WTC11 (cell line): ENCODE measurements at regions of chr1 and their contacts with region 1.

Region 1: DNA sequence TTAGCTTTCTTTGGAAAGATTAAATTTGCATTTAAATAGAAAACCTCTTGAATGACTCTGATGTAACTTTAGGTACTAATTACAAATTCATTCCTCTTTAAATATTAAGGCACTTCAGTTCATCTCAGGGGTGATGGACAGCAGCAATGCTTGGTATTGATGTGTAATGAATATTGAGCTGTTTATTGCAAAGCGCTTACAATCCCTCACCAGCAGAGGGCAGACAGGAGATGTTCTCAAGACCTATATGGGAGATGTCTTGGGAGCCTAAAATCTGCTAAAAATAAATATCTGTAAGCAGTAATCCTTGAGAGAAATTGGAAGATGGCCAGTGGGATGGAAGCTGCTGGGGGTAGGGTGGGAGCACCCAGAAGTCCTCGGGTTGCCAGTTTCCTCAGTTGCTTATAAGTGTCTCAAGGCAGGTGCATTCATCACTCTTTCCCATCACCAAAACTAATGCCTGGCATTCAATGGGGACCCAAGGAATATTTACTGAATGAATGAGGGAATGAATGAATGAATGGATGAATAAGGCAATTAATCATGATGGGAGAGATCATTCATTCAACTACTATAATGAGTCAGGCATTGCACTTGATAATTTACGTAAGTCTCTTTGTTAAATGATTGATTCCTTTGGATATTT is 2.3 kb downstream of the KLHDC8A start:
- DNase-seq: peak; percentile 68
- ATAC-seq: no peak
- H3K4me3 Mint-ChIP-seq: no peak overlapping the region
- H3K27ac Mint-ChIP-seq: no peak overlapping the region
- H3K4me1 Mint-ChIP-seq: peaks cover 79% of the 10 kb centered on the region
- H3K27me3 Mint-ChIP-seq: no peaks in the 10 kb centered on the region; the same call in 1 of the 2 replicates
- CTCF ChIP-seq: peak; percentile 83

Region 2: GRCh38 chr1:205243350-205244191 is 110.8 kb before region 1 on chr1:
- CTCF ChIA-PET with region 1: no interaction called
- POLR2A ChIA-PET with region 1: no interaction called
- DNase-seq: no peak
- ATAC-seq: no peak
- H3K4me3 Mint-ChIP-seq: no peak overlapping the region
- H3K27ac Mint-ChIP-seq: no peak overlapping the region
- H3K4me1 Mint-ChIP-seq: peaks cover 7% of the 10 kb centered on the region; the same call in 1 of the 2 replicates
- H3K27me3 Mint-ChIP-seq: no peaks in the 10 kb centered on the region
- CTCF ChIP-seq: no peak

Region 3: GRCh38 chr1:205273551-205273982 is 80.8 kb before region 1 on chr1:
- CTCF ChIA-PET with region 1: interaction called, 53 read pairs
- POLR2A ChIA-PET with region 1: no interaction called
- DNase-seq: peak; percentile 95
- ATAC-seq: peak; percentile 78
- H3K4me3 Mint-ChIP-seq: no peak overlapping the region
- H3K27ac Mint-ChIP-seq: peak overlapping the region; percentile 83
- H3K4me1 Mint-ChIP-seq: peaks cover 17% of the 10 kb centered on the region
- H3K27me3 Mint-ChIP-seq: no peaks in the 10 kb centered on the region
- CTCF ChIP-seq: peak; percentile 97

Region 4: DNA sequence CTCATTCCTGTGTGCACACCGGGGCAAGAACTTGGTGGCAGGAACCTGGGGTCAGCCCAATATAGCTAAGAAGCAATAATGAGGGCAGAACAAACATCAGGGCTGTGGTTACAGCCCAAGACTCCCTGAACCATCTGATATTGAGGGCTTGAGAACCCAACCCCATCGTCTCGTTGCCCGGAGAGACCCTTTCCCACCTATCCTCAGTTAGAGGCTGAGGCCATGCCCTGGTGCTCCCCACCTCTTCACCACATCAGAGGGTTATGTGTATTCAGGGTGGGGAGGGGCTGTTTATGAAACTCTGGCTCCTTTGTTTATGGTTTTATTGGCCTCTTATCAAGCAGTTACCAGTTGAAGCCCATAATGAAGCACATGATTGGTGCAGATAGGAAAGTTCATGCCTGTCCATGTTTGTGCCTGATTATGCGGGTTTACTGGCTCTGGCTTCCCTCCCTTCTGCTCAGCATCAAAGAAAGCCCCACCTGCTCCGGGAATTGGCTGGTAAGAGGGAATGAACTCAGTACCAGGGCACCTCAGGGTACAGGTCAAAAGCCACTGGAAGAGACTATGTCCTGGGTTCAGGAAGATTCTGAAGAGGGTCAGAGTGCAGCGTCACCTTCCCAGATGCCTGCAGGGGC is 47.3 kb before region 1 on chr1:
- CTCF ChIA-PET with region 1: no interaction called
- POLR2A ChIA-PET with region 1: no interaction called
- DNase-seq: no peak
- ATAC-seq: no peak
- H3K4me3 Mint-ChIP-seq: no peak overlapping the region
- H3K27ac Mint-ChIP-seq: no peak overlapping the region
- H3K4me1 Mint-ChIP-seq: peaks cover 21% of the 10 kb centered on the region
- H3K27me3 Mint-ChIP-seq: no peaks in the 10 kb centered on the region
- CTCF ChIP-seq: no peak

Region 5: GRCh38 chr1:205335643-205336091 is 18.7 kb before region 1 on chr1:
- CTCF ChIA-PET with region 1: interaction called, 122 read pairs
- POLR2A ChIA-PET with region 1: no interaction called
- DNase-seq: peak; percentile 87
- ATAC-seq: peak; percentile 87
- H3K4me3 Mint-ChIP-seq: no peak overlapping the region
- H3K27ac Mint-ChIP-seq: no peak overlapping the region
- H3K4me1 Mint-ChIP-seq: peaks cover 21% of the 10 kb centered on the region
- H3K27me3 Mint-ChIP-seq: peaks cover 9% of the 10 kb centered on the region
- CTCF ChIP-seq: peak; percentile 60; the same call in 1 of the 2 replicates

Region 6: GRCh38 chr1:205382561-205382960 is 28.2 kb after region 1 on chr1:
- CTCF ChIA-PET with region 1: interaction called, 28 read pairs
- POLR2A ChIA-PET with region 1: no interaction called
- DNase-seq: no peak
- ATAC-seq: peak; percentile 57
- H3K4me3 Mint-ChIP-seq: no peak overlapping the region
- H3K27ac Mint-ChIP-seq: no peak overlapping the region
- H3K4me1 Mint-ChIP-seq: no peaks in the 10 kb centered on the region; the same call in 1 of the 2 replicates
- H3K27me3 Mint-ChIP-seq: no peaks in the 10 kb centered on the region
- CTCF ChIP-seq: no peak

Region 7: DNA sequence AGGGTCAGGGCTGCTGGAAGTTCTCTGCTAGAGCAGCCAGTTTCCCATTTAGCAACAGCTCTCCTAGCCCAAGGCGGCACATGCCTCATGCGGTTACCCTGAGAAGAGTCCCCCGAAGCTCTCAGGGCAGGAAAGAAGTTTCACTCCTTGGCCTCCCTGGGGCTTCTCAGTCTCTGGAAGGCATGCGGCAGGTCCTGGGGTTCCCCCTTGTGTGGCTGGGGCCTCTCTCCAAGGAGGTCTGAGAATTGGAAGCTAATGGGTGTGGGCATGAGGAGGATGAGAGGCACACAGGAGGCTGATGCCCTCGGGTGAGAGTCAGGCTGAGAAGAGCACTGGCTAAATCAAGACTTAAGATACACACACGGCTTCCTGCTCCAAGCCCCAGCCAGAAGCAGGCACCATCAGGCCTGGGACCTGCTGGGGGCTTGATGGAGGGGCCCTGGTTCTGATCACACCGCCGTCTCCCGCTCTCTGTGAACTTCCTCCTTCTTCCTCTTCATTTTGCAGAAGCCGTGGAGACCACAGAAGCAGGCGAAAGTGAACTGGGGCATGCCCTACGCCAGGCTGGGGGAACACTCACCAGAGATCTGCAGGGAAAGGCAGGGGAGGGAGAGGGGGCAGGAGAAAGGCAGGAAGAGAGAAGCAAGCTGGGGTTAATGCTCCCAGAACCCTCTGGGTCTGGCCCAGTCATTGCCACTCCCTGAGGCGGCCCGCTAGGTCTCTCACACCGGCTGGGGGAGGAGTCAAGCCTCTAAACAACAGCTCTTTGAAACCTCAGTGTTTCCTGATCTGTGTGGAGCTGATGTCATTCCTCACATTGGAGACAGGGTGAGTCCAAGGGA is 86.3 kb after region 1 on chr1:
- CTCF ChIA-PET with region 1: interaction called, 24 read pairs
- POLR2A ChIA-PET with region 1: no interaction called
- DNase-seq: peak; percentile 53
- ATAC-seq: peak; percentile 16
- H3K4me3 Mint-ChIP-seq: no peak overlapping the region
- H3K27ac Mint-ChIP-seq: no peak overlapping the region; the same call in 1 of the 2 replicates
- H3K4me1 Mint-ChIP-seq: peaks cover 91% of the 10 kb centered on the region
- H3K27me3 Mint-ChIP-seq: peaks cover 27% of the 10 kb centered on the region
- CTCF ChIP-seq: no peak

Region 8: DNA sequence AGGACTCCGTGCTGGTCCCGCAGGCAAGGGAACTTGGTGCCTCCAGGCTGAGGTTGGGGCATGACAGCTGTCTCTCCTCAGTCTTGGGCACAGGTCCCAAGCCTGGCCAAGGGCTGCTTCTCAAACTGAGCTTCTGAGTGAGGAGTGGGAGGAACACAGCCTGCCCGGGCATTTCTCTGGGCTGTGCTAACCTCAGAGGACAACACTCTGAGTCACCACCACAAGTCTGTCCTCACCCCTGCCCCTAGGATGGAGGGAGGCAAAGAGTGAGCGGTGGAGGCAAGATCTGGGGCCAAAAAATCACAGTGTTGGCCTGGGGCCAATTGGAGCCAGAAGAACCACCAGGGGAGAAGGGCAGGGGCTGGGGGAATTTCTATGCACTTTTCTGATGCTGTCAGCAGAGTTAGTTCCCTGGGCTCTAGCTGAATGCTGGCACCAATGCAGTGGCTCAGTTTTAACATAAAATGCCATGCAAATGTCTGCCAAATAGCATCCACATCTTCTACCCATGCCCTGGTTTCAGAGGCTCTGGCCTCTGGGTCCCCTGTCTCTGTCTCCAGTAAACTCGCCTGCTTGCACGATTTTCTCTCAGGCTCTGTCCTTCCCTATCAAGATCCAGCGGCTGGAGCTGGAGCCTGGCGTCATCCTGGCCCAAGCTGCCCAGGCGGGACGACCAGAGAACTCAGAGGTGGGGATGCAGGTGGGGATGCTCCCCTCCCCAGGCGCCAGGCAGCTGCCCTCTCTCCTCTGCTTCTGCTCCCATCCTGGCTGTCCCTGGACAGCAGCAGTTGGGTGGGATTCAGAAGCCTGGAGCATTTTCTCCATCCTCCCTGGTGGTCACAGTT is 139.1 kb after region 1 on chr1:
- CTCF ChIA-PET with region 1: interaction called, 90 read pairs
- POLR2A ChIA-PET with region 1: no interaction called
- DNase-seq: no peak
- ATAC-seq: no peak
- H3K4me3 Mint-ChIP-seq: no peak overlapping the region
- H3K27ac Mint-ChIP-seq: no peak overlapping the region
- H3K4me1 Mint-ChIP-seq: peaks cover 43% of the 10 kb centered on the region
- H3K27me3 Mint-ChIP-seq: peaks cover 24% of the 10 kb centered on the region
- CTCF ChIP-seq: no peak